Vagina (tissue), 2 donors: ENCODE measurements at regions of chr10 and their contacts with region 1.

Region 1: GRCh38 chr10:26177341-26177740 is 39.2 kb upstream of the GAD2 start:
- DNase-seq: no peak
- H3K4me3 ChIP-seq: no peak overlapping the region
- H3K27ac ChIP-seq: no peak overlapping the region
- H3K4me1 ChIP-seq: no peaks in the 10 kb centered on the region
- H3K27me3 ChIP-seq: no peaks in the 10 kb centered on the region
- CTCF ChIP-seq: no peak
- POLR2A ChIP-seq: no peak

Region 2: DNA sequence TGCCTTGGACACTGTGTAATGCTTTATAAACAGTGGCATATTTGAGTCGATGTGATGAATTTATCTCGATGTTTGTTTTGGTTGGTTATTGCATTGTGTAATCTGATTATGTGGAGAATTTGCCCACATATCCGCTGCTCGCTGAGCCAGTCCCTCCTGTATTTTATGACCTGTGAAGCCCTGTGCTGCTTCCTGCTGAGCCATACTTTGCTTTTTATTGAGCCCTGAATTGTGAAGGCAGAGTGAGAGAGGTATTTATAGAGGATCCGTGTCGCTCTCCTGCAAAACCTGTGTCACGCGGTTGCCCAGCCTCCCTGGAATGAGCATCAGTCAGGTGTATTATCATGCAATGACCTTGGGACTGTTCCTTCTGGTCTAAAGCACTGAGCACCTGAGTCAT is 1707.4 kb before region 1 on chr10:
- intact Hi-C with region 1: no loop called
- DNase-seq: no peak
- H3K4me3 ChIP-seq: no peak overlapping the region
- H3K27ac ChIP-seq: no peak overlapping the region
- H3K4me1 ChIP-seq: peaks cover 15% of the 10 kb centered on the region
- H3K27me3 ChIP-seq: no peaks in the 10 kb centered on the region
- CTCF ChIP-seq: no peak
- POLR2A ChIP-seq: no peak

Region 3: GRCh38 chr10:26048756-26049155 is 128.6 kb before region 1 on chr10:
- intact Hi-C with region 1: no loop called
- DNase-seq: no peak
- H3K4me3 ChIP-seq: no peak overlapping the region
- H3K27ac ChIP-seq: no peak overlapping the region
- H3K4me1 ChIP-seq: peaks cover 9% of the 10 kb centered on the region
- H3K27me3 ChIP-seq: no peaks in the 10 kb centered on the region
- CTCF ChIP-seq: no peak
- POLR2A ChIP-seq: no peak

Region 4: GRCh38 chr10:26197248-26197647 is 19.9 kb after region 1 on chr10:
- intact Hi-C with region 1: no loop called
- DNase-seq: no peak
- H3K4me3 ChIP-seq: no peak overlapping the region
- H3K27ac ChIP-seq: no peak overlapping the region
- H3K4me1 ChIP-seq: no peaks in the 10 kb centered on the region
- H3K27me3 ChIP-seq: no peaks in the 10 kb centered on the region
- CTCF ChIP-seq: no peak
- POLR2A ChIP-seq: no peak

Region 5: DNA sequence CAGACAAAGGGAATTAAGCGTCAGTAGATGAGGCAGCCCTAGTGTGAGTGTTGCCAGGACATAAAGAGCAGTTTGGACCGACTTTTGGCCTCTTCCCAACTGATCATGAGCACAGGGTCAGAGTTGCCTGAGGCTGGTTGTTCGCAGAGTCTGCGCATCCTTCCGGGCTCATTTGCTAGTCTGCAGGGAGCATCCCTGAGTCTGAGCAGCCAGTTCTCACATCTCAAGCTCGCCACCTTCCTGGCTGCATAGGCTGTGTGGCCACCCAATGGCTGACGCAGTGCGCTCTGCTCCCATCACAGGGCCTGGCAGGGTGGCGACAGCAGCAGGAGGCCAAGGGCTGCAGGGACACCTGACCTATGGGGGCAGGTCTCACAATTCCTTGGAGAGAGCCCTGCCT is 44.2 kb after region 1 on chr10:
- intact Hi-C with region 1: loop called (anchors 1 kb)
- DNase-seq: no peak
- H3K4me3 ChIP-seq: no peak overlapping the region
- H3K27ac ChIP-seq: no peak overlapping the region
- H3K4me1 ChIP-seq: peaks cover 16% of the 10 kb centered on the region
- H3K27me3 ChIP-seq: peaks cover 7% of the 10 kb centered on the region
- CTCF ChIP-seq: no peak
- POLR2A ChIP-seq: no peak

Region 6: GRCh38 chr10:26251925-26252324 is 74.6 kb after region 1 on chr10:
- intact Hi-C with region 1: no loop called
- DNase-seq: no peak
- H3K4me3 ChIP-seq: no peak overlapping the region
- H3K27ac ChIP-seq: no peak overlapping the region
- H3K4me1 ChIP-seq: no peaks in the 10 kb centered on the region
- H3K27me3 ChIP-seq: no peaks in the 10 kb centered on the region
- CTCF ChIP-seq: no peak
- POLR2A ChIP-seq: no peak